HCT116 (cell line): ENCODE measurements at regions of chr2 and their contacts with region 1.

Region 1: GRCh38 chr2:226649871-226650660 is 149.6 kb downstream of the IRS1 start:
- DNase-seq: peak; percentile 97
- ATAC-seq: peak; percentile 71
- H3K4me3 ChIP-seq: peak overlapping the region in 1 of 2 experiments; percentile 8; a peak in 1 of 4 replicates
- H3K27ac ChIP-seq: peak overlapping the region; percentile 98
- H3K4me1 ChIP-seq: peaks cover 57 to 93% of the 10 kb centered on the region in 2 experiments
- H3K27me3 ChIP-seq: no peaks in the 10 kb centered on the region
- CTCF ChIP-seq: no peak
- POLR2A ChIP-seq: no peak
- RAD21 ChIP-seq: no peak

Region 2: DNA sequence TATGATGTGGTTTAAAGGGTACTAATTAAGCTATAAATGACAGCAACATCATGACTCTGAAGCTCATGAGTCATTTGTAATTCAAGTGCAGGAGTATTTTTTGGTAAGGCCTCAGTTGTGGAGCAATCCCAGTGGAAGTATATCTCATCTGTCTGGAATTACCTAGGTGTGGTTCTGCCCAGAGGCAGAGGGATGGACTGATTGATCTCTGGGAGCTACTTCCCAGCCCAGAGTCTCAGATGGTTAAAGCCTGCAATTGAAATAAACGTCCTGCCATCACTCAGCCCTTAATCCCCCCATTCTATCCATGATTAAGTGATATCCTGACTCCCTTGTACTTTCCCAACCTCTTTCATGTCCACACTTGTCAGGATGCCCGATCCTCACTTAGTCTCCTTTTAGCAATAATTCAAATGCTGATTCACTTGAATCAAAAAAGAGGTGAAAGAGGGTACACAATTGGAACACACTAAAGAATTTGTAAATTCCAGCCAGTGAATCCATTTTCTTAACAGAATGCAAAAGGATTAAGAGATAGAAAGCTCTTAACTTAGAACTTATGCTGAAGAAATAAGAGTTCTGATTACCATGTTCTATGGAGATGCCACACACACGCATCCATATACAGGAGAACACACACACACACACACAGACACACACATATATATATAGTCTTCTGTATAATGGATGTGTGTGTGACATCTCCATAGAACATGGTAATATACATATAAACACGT is 586.2 kb before region 1 on chr2:
- CTCF ChIA-PET with region 1: no interaction called
- POLR2A ChIA-PET with region 1: no interaction called
- RAD21 ChIA-PET with region 1: no interaction called
- intact Hi-C with region 1: loop called (anchors 2 kb)
- DNase-seq: peak; percentile 96
- ATAC-seq: peak; percentile 88
- H3K4me3 ChIP-seq: no peak overlapping the region
- H3K27ac ChIP-seq: peak overlapping the region; percentile 99
- H3K4me1 ChIP-seq: peaks cover 43 to 73% of the 10 kb centered on the region in 2 experiments
- H3K27me3 ChIP-seq: no peaks in the 10 kb centered on the region
- CTCF ChIP-seq: no peak
- POLR2A ChIP-seq: no peak
- RAD21 ChIP-seq: peak; percentile 43; the same call in 1 of the 2 replicates

Region 3: DNA sequence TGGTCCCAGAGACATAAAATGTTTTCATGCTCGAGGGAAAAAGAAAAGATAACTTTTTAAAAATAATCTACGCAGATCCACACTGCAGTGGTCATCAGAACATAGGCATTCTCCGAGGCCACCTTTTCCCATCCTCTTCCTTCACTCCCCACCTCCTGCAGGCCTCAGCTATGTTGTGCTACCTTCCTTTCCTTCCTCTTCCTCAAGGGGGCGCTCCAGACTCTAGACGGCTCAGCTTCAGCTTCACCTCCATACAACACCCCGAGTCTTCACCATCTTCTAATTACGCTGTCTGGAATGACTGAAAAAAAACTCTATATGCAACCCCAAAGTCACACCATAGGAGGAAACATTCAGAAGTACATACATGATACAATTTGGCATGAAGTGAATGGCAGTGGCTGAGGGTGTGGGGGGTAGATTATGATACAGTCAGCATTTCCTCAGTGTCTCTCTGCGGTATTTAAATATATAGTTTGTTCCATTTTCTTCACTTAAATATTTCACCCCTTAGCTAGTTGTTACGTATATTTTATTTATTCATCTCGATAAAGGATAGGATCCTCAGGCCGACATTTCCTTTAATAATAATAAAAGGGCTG is 434.1 kb before region 1 on chr2:
- CTCF ChIA-PET with region 1: interaction called, 6 read pairs
- POLR2A ChIA-PET with region 1: interaction called, 7 read pairs
- RAD21 ChIA-PET with region 1: interaction called in 1 of 2 experiments, 3 read pairs
- intact Hi-C with region 1: loop called (anchors 5 kb)
- DNase-seq: peak; percentile 77
- ATAC-seq: peak; percentile 93
- H3K4me3 ChIP-seq: no peak overlapping the region
- H3K27ac ChIP-seq: peak overlapping the region; percentile 94
- H3K4me1 ChIP-seq: peaks cover 43 to 56% of the 10 kb centered on the region in 2 experiments
- H3K27me3 ChIP-seq: no peaks in the 10 kb centered on the region
- CTCF ChIP-seq: peak; percentile 48 to 93 (median 89); a peak in 5 of 6 replicates
- POLR2A ChIP-seq: no peak
- RAD21 ChIP-seq: peak; percentile 96

Region 4: GRCh38 chr2:226611944-226612318 is 38.1 kb before region 1 on chr2:
- CTCF ChIA-PET with region 1: no interaction called
- POLR2A ChIA-PET with region 1: interaction called, 10 read pairs
- RAD21 ChIA-PET with region 1: interaction called, 3 read pairs
- intact Hi-C with region 1: loop called (anchors 2 kb)
- DNase-seq: peak; percentile 94
- ATAC-seq: peak; percentile 84
- H3K4me3 ChIP-seq: no peak overlapping the region
- H3K27ac ChIP-seq: peak overlapping the region; percentile 96
- H3K4me1 ChIP-seq: peaks cover 43 to 57% of the 10 kb centered on the region in 2 experiments
- H3K27me3 ChIP-seq: no peaks in the 10 kb centered on the region
- CTCF ChIP-seq: no peak
- POLR2A ChIP-seq: peak; percentile 6
- RAD21 ChIP-seq: peak; percentile 57

Region 5: GRCh38 chr2:226756129-226756528 is 106.1 kb after region 1 on chr2:
- CTCF ChIA-PET with region 1: no interaction called
- POLR2A ChIA-PET with region 1: interaction called, 6 read pairs
- RAD21 ChIA-PET with region 1: interaction called in 1 of 2 experiments, 3 read pairs
- intact Hi-C with region 1: loop called (anchors 2 kb)
- DNase-seq: peak; percentile 97
- ATAC-seq: peak; percentile 76
- H3K4me3 ChIP-seq: peak overlapping the region in 1 of 2 experiments; percentile 27; a peak in 2 of 4 replicates
- H3K27ac ChIP-seq: peak overlapping the region; percentile 96
- H3K4me1 ChIP-seq: peaks cover 87 to 96% of the 10 kb centered on the region in 2 experiments
- H3K27me3 ChIP-seq: no peaks in the 10 kb centered on the region
- CTCF ChIP-seq: no peak
- POLR2A ChIP-seq: no peak
- RAD21 ChIP-seq: peak; percentile 37

Region 6: GRCh38 chr2:226813148-226813701 is 163.2 kb after region 1 on chr2:
- CTCF ChIA-PET with region 1: no interaction called
- POLR2A ChIA-PET with region 1: no interaction called
- RAD21 ChIA-PET with region 1: no interaction called
- intact Hi-C with region 1: no loop called
- DNase-seq: no peak
- ATAC-seq: peak; percentile 74
- H3K4me3 ChIP-seq: no peak overlapping the region
- H3K27ac ChIP-seq: no peak overlapping the region
- H3K4me1 ChIP-seq: no peaks in the 10 kb centered on the region
- H3K27me3 ChIP-seq: no peaks in the 10 kb centered on the region
- CTCF ChIP-seq: peak; percentile 49 to 64 (median 63); a peak in 5 of 6 replicates
- POLR2A ChIP-seq: no peak
- RAD21 ChIP-seq: peak; percentile 79

Region 7: DNA sequence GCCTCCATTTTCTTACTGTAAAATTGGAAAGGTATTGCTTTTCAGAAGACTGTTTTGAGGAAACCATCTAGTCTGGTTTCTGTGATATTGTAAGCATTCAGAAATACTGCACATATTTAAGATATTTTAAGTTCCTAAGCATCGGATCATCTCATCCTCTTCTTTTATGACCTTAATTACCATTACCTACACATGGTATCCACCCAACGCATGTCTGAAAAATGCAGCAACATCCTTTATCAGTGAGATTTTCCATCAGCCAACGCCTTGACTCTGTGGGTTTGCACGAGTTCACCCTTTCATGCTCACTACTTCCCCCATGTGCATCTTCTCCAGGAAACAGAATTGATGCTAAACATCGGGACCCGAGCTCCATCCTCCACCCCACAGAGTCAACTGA is 429.7 kb after region 1 on chr2:
- CTCF ChIA-PET with region 1: no interaction called
- POLR2A ChIA-PET with region 1: no interaction called
- RAD21 ChIA-PET with region 1: no interaction called
- intact Hi-C with region 1: no loop called
- DNase-seq: no peak
- ATAC-seq: no peak
- H3K4me3 ChIP-seq: no peak overlapping the region
- H3K27ac ChIP-seq: no peak overlapping the region
- H3K4me1 ChIP-seq: no peaks in the 10 kb centered on the region
- H3K27me3 ChIP-seq: no peaks in the 10 kb centered on the region
- CTCF ChIP-seq: no peak
- POLR2A ChIP-seq: no peak
- RAD21 ChIP-seq: no peak